Activated CD4-positive, alpha-beta T cell treated with anti-CD3 and anti-CD28 coated beads for 36 hours (primary cell): ENCODE measurements at regions of chr15 and their contacts with region 1.

Region 1: GRCh38 chr15:38536201-38536676 is 28.4 kb downstream of the RASGRP1 start:
- DNase-seq: no peak
- ATAC-seq: no peak
- H3K4me3 Mint-ChIP-seq: no peak overlapping the region
- H3K27ac Mint-ChIP-seq: peak overlapping the region; percentile 26
- H3K4me1 Mint-ChIP-seq: peaks cover 98% of the 10 kb centered on the region
- H3K27me3 Mint-ChIP-seq: no peaks in the 10 kb centered on the region

Region 2: DNA sequence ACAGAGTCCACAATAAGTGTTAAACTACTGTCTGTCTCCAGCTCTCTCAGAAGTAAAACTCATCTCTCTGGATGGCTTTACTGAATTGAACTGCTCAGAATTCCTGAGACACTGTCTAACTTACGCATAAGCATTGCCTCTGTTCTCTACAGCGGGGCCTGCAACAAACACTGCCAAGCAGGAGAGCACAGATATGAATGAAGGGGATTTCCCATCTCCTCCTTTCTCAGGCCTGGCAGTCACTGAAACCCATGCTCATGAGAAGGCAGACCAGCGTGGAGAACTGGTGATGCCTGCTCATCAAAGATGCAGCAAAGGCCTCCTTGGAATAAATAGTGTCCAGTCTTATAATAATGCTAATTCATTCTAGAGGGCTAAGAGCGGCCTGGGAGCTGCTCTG is 18.1 kb after region 1 on chr15:
- CTCF ChIA-PET with region 1: interaction called, 7 read pairs
- POLR2A ChIA-PET with region 1: no interaction called
- intact Hi-C with region 1: loop called in 1 of 2 experiments (anchors 2 kb)
- DNase-seq: peak; percentile 73
- ATAC-seq: peak; percentile 74
- H3K4me3 Mint-ChIP-seq: no peak overlapping the region
- H3K27ac Mint-ChIP-seq: peak overlapping the region; percentile 91
- H3K4me1 Mint-ChIP-seq: peaks cover 89% of the 10 kb centered on the region
- H3K27me3 Mint-ChIP-seq: no peaks in the 10 kb centered on the region